MCF 10A (cell line): ENCODE measurements at regions of chr13 and their contacts with region 1.

Region 1: GRCh38 chr13:97749174-97749573 is 204.3 kb upstream of the IPO5 start:
- DNase-seq: peak; percentile 93
- H3K4me3 Mint-ChIP-seq: no peak overlapping the region
- H3K27ac Mint-ChIP-seq: no peak overlapping the region
- H3K4me1 Mint-ChIP-seq: peaks cover 19% of the 10 kb centered on the region
- H3K27me3 Mint-ChIP-seq: no peaks in the 10 kb centered on the region
- CTCF ChIP-seq: peak; percentile 44

Region 2: GRCh38 chr13:97726664-97727280 is 22.4 kb before region 1 on chr13:
- CTCF ChIA-PET with region 1: interaction called, 10 read pairs
- POLR2A ChIA-PET with region 1: no interaction called
- intact Hi-C with region 1: no loop called
- DNase-seq: peak; percentile 96
- H3K4me3 Mint-ChIP-seq: no peak overlapping the region
- H3K27ac Mint-ChIP-seq: peak overlapping the region; percentile 70
- H3K4me1 Mint-ChIP-seq: peaks cover 52% of the 10 kb centered on the region
- H3K27me3 Mint-ChIP-seq: no peaks in the 10 kb centered on the region
- CTCF ChIP-seq: no peak

Region 3: GRCh38 chr13:97798836-97799235 is 49.7 kb after region 1 on chr13:
- CTCF ChIA-PET with region 1: interaction called, 126 read pairs
- POLR2A ChIA-PET with region 1: interaction called, 14 read pairs
- intact Hi-C with region 1: loop called (anchors 1 kb)
- DNase-seq: no peak
- H3K4me3 Mint-ChIP-seq: peak overlapping the region; percentile 38
- H3K27ac Mint-ChIP-seq: peak overlapping the region; percentile 76
- H3K4me1 Mint-ChIP-seq: peaks cover 26% of the 10 kb centered on the region
- H3K27me3 Mint-ChIP-seq: no peaks in the 10 kb centered on the region
- CTCF ChIP-seq: no peak

Region 4: GRCh38 chr13:97810152-97810551 is 61.0 kb after region 1 on chr13:
- CTCF ChIA-PET with region 1: interaction called, 8 read pairs
- POLR2A ChIA-PET with region 1: no interaction called
- intact Hi-C with region 1: loop called (anchors 2 kb)
- DNase-seq: peak; percentile 48
- H3K4me3 Mint-ChIP-seq: no peak overlapping the region
- H3K27ac Mint-ChIP-seq: no peak overlapping the region
- H3K4me1 Mint-ChIP-seq: peaks cover 9% of the 10 kb centered on the region
- H3K27me3 Mint-ChIP-seq: peaks cover 25% of the 10 kb centered on the region
- CTCF ChIP-seq: peak; percentile 54

Region 5: DNA sequence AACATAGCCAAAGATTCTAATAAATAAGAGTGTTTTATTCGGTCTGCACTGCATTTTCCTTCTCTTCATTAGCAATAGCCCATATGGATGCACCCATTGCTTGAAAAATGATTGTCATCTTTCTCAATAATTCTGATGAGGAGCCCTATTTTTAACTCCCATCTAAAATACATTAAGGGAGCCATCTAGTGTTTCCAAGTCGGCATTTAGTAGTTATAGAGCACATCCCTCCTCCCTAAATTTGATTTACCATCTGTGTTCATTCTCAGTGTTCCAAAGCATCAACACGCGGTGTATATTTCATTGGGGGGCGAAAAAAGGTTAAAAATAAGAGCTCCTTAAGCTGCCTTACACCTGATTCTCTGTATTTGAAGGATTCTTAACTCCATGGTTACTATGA is 85.1 kb after region 1 on chr13:
- CTCF ChIA-PET with region 1: interaction called, 3 read pairs
- POLR2A ChIA-PET with region 1: no interaction called
- intact Hi-C with region 1: loop called (anchors 1 kb)
- DNase-seq: peak; percentile 9
- H3K4me3 Mint-ChIP-seq: no peak overlapping the region
- H3K27ac Mint-ChIP-seq: no peak overlapping the region
- H3K4me1 Mint-ChIP-seq: no peaks in the 10 kb centered on the region
- H3K27me3 Mint-ChIP-seq: peaks cover 23% of the 10 kb centered on the region
- CTCF ChIP-seq: no peak

Region 6: GRCh38 chr13:98349731-98350305 is 600.6 kb after region 1 on chr13:
- CTCF ChIA-PET with region 1: no interaction called
- POLR2A ChIA-PET with region 1: no interaction called
- intact Hi-C with region 1: no loop called
- DNase-seq: no peak
- H3K4me3 Mint-ChIP-seq: no peak overlapping the region
- H3K27ac Mint-ChIP-seq: no peak overlapping the region
- H3K4me1 Mint-ChIP-seq: no peaks in the 10 kb centered on the region
- H3K27me3 Mint-ChIP-seq: no peaks in the 10 kb centered on the region
- CTCF ChIP-seq: no peak